BJ (cell line): ENCODE measurements at regions of chr11 and their contacts with region 1.

Region 1: DNA sequence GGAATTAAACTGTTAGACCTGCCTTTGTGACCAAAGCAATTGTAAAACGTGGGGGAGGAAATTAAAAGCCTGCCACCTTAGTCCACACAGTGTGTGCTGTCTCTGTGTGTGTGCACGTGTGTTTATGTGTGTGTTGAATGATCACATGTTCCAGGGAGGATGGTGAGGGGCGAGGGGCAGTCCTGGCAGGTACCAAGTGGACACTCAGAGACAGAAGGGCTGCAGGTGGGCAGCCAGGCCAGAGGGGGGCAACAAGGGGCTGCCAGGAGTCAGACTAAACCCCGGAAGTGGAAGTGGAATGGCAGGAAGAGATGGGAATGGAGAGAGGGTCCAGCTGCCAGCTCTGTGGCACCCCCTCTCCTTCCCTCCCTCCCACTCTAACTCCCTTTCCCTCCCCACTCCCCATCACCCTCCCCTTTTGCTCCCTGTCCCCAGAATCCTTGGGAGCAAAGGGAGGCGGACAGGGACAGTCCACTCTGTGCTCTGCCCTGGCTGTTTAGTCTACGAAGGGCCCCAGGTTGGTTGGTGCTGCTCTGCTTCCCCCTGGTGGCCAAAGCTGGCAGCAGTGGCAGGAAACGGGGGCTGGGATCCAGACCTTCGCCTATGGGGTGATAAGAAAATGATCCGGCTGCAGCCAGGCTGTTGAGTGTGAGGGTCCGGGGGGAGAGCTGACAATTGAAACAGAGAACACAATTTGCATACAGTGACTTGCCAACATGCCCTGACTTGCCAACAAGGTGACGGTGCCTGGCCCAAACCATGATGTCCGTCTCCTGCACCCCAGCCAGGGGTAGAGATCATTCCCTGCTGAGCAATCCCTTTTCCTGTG is 24.4 kb downstream of the P2RY2 start:
- DNase-seq: no peak
- H3K4me3 ChIP-seq: no peak overlapping the region
- H3K27me3 ChIP-seq: no peaks in the 10 kb centered on the region
- CTCF ChIP-seq: peak; percentile 98

Region 2: DNA sequence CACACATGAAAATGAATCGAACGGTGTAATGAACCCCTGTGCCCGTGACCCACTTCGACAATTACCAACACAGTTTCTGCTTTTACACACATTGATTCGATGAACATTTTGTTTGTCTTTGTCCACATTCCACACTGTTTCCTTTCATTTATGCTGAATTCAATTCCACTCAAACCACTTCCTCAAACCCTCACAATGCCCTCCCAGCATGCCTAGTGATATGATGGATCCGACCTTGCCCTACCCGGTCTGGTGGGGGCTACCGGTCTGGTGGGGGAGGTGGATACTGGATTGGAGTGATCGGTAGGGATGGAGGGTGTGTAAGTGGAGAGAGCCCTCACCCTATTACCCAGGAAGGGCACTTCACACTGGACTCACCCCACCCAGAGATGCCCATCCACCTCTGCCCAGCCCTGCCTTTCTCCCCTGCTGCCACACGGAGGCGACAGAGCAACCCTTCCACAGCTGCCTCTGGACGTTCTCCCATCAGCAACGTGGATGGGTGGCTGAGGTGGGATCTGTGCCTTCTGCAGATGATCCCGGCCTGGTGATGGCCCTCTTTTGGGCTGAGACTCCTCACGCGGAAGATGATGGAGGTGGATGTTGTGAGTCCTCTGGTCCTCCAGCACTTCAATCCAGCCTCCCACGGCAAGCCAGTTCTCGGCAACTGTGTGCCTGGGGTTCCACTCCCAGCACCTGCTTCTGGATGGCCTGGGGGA is 57.4 kb before region 1 on chr11:
- CTCF ChIA-PET with region 1: interaction called, 89 read pairs
- POLR2A ChIA-PET with region 1: no interaction called
- DNase-seq: no peak
- H3K4me3 ChIP-seq: no peak overlapping the region
- H3K27me3 ChIP-seq: no peaks in the 10 kb centered on the region; the same call in 1 of the 2 replicates
- CTCF ChIP-seq: peak; percentile 90

Region 3: DNA sequence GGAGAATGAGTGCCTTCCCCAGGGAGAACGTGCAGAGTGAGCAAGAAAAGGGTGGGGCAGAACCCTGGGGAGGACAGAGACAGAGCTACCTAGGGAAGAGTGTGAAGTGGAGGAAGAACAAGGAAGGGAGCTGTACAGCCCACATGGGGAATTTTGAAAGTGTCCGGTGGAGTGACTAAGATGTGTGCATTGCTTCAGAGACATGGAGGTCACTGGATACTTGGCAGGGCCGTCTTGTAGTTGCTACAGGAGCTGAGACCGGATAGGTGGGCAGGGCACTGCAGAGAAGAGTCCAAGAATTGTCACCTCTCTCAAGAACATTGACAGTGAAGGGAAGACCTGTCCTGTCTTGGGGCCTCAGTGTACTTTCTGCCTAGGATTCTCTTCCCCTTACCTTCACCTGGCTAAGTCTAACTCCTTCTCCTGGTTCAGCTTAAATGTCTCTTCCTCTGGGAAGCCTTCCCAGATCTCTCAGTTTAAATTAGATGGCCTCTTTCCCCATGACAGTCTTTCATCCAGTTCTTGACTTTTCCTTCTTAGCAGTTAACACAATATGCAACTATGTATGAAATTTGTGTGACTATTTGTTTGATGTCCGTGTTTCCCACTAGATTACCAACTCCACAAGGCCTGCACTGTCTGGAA is 20.5 kb after region 1 on chr11:
- CTCF ChIA-PET with region 1: interaction called, 11 read pairs
- POLR2A ChIA-PET with region 1: no interaction called
- DNase-seq: no peak
- H3K4me3 ChIP-seq: no peak overlapping the region
- H3K27me3 ChIP-seq: peaks cover 9% of the 10 kb centered on the region
- CTCF ChIP-seq: no peak

Region 4: GRCh38 chr11:73314117-73314961 is 71.9 kb after region 1 on chr11:
- CTCF ChIA-PET with region 1: no interaction called
- POLR2A ChIA-PET with region 1: no interaction called
- DNase-seq: no peak
- H3K4me3 ChIP-seq: peak overlapping the region; percentile 80
- H3K27me3 ChIP-seq: no peaks in the 10 kb centered on the region
- CTCF ChIP-seq: peak; percentile 23; the same call in 1 of the 2 replicates